ENCODE measurements at regions of chr14 and their contacts with region 1.

Region 1: GRCh38 chr14:57692671-57693070 is 173.2 kb downstream of the SLC35F4 start:
- DNase-seq: peak; percentile 26 to 65
- ATAC-seq: peak; percentile 77 to 81
- H3K4me3 ChIP-seq: no peak overlapping the region
- H3K27ac ChIP-seq: no peak overlapping the region
- H3K4me1 ChIP-seq: no peaks in the 10 kb centered on the region
- CTCF ChIP-seq: peak; percentile 61
- EP300 ChIP-seq: no peak
- POLR2A ChIP-seq: no peak
- RAD21 ChIP-seq: peak; percentile 76 to 78

Region 2: GRCh38 chr14:57704763-57705162 is 12.1 kb after region 1 on chr14:
- CTCF ChIA-PET with region 1: interaction called, 13 read pairs
- POLR2A ChIA-PET with region 1: no interaction called
- DNase-seq: no peak
- ATAC-seq: no peak
- H3K4me3 ChIP-seq: no peak overlapping the region
- H3K27ac ChIP-seq: no peak overlapping the region
- H3K4me1 ChIP-seq: no peaks in the 10 kb centered on the region
- CTCF ChIP-seq: no peak
- EP300 ChIP-seq: no peak
- POLR2A ChIP-seq: no peak
- RAD21 ChIP-seq: no peak

Region 3: GRCh38 chr14:57871459-57872080 is 178.9 kb after region 1 on chr14:
- CTCF ChIA-PET with region 1: interaction called, 40 read pairs
- POLR2A ChIA-PET with region 1: no interaction called
- DNase-seq: peak; percentile 21 to 43
- ATAC-seq: peak; percentile 75 to 89
- H3K4me3 ChIP-seq: no peak overlapping the region
- H3K27ac ChIP-seq: no peak overlapping the region
- H3K4me1 ChIP-seq: no peaks in the 10 kb centered on the region
- CTCF ChIP-seq: peak; percentile 67
- EP300 ChIP-seq: no peak
- POLR2A ChIP-seq: no peak
- RAD21 ChIP-seq: peak; percentile 65 to 68

Region 4: GRCh38 chr14:57884175-57884574 is 191.5 kb after region 1 on chr14:
- CTCF ChIA-PET with region 1: interaction called, 11 read pairs
- POLR2A ChIA-PET with region 1: no interaction called
- DNase-seq: no peak
- ATAC-seq: no peak
- H3K4me3 ChIP-seq: no peak overlapping the region
- H3K27ac ChIP-seq: no peak overlapping the region
- H3K4me1 ChIP-seq: no peaks in the 10 kb centered on the region
- CTCF ChIP-seq: 0 out of 3 replicates have a peak, but pooled peaks have one; percentile 9
- EP300 ChIP-seq: no peak
- POLR2A ChIP-seq: no peak
- RAD21 ChIP-seq: peak; percentile 11 to 30; a peak in 1 of 5 replicates

Region 5: DNA sequence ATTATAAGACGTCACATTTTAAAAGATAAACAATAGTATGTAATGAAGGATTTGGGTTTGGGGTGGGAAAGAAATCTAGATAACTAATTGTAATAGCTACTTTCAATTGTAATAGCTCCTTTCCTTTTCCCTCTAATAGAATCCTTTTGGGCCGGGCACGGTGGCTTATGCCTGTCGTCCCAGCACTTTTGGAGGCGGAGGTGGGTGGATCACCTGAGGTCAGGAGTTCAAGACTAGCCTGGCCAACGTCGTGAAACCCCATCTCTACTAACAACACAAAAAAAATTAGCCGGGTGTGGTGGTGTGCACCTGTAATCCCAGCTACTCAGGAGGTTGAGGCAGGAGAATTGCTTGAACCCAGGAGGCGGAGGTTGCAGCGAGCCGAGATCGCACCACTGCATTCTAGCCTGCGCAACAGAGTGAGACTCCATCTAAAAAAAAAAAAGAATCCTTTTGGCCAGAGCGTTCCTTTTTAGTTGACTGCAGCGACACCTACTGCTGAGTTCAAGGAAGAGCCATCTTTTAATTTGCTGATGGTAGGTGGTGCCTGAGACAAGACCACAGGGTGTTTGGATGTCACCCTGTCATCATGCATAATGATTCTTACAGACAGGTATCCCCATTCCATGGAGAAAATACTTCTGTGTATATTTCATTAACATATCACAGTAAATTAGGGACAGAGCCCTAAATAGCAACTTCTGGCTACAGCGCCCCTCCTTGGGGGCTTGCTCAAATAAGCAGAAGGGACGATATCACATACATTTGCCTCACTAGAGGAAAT is 379.8 kb after region 1 on chr14:
- CTCF ChIA-PET with region 1: interaction called, 11 read pairs
- POLR2A ChIA-PET with region 1: no interaction called
- DNase-seq: peak; percentile 63 to 72
- ATAC-seq: peak; percentile 93 to 98
- H3K4me3 ChIP-seq: peak overlapping the region; percentile 36; the same call in 1 of the 3 replicates
- H3K27ac ChIP-seq: no peak overlapping the region
- H3K4me1 ChIP-seq: no peaks in the 10 kb centered on the region
- CTCF ChIP-seq: peak; percentile 86
- EP300 ChIP-seq: no peak
- POLR2A ChIP-seq: no peak
- RAD21 ChIP-seq: peak; percentile 82 to 85